Activated CD4-positive, alpha-beta T cell treated with anti-CD3 and anti-CD28 coated beads, Interleukin-2, amount 10 ng/mL, durations not matched to agents 7 days and 5 days (primary cell): ENCODE measurements at regions of chr2 and their contacts with region 1.

Region 1: DNA sequence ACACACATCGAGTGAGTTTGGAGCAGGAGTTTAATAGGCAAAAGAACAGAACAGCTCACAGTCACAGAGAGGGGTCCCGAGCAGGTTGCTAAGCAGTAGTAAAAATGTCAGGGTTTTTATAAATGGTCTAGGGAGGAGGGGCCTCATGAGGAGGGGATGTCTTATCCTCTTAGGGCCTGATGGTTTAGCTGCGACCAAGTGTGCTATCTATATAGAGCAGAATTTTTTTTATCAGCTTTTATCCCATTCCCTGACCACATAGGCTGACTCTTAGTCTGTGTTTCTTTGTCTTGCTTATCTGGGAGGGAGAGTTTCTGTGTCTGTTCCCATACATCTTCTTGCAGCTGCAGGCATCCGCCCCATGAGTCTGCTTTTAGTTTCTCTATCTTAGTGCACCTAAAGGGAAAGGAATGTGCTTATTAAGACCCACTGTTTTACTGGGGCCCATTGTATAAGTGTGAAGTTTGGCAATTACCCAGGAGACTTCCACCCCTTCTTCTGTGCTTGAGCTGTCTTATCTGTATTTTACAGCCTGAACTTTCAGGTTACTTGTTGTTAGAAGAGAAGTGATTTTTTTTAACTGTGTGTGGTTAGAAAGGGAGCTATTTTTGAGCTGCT is 30.4 kb upstream of the GMCL1 start:
- DNase-seq: no peak
- H3K4me3 Mint-ChIP-seq: no peak overlapping the region
- H3K27ac Mint-ChIP-seq: no peak overlapping the region
- H3K4me1 Mint-ChIP-seq: peaks cover 29% of the 10 kb centered on the region
- H3K27me3 Mint-ChIP-seq: no peaks in the 10 kb centered on the region

Region 2: GRCh38 chr2:69694894-69695849 is 103.8 kb before region 1 on chr2:
- CTCF ChIA-PET with region 1: no interaction called
- POLR2A ChIA-PET with region 1: no interaction called
- DNase-seq: no peak
- H3K4me3 Mint-ChIP-seq: no peak overlapping the region
- H3K27ac Mint-ChIP-seq: peak overlapping the region; percentile 55
- H3K4me1 Mint-ChIP-seq: peaks cover 81% of the 10 kb centered on the region
- H3K27me3 Mint-ChIP-seq: peaks cover 2% of the 10 kb centered on the region

Region 3: GRCh38 chr2:69773206-69773767 is 25.7 kb before region 1 on chr2:
- CTCF ChIA-PET with region 1: no interaction called
- POLR2A ChIA-PET with region 1: no interaction called
- DNase-seq: no peak
- H3K4me3 Mint-ChIP-seq: no peak overlapping the region
- H3K27ac Mint-ChIP-seq: peak overlapping the region; percentile 83
- H3K4me1 Mint-ChIP-seq: peaks cover 64% of the 10 kb centered on the region
- H3K27me3 Mint-ChIP-seq: no peaks in the 10 kb centered on the region

Region 4: DNA sequence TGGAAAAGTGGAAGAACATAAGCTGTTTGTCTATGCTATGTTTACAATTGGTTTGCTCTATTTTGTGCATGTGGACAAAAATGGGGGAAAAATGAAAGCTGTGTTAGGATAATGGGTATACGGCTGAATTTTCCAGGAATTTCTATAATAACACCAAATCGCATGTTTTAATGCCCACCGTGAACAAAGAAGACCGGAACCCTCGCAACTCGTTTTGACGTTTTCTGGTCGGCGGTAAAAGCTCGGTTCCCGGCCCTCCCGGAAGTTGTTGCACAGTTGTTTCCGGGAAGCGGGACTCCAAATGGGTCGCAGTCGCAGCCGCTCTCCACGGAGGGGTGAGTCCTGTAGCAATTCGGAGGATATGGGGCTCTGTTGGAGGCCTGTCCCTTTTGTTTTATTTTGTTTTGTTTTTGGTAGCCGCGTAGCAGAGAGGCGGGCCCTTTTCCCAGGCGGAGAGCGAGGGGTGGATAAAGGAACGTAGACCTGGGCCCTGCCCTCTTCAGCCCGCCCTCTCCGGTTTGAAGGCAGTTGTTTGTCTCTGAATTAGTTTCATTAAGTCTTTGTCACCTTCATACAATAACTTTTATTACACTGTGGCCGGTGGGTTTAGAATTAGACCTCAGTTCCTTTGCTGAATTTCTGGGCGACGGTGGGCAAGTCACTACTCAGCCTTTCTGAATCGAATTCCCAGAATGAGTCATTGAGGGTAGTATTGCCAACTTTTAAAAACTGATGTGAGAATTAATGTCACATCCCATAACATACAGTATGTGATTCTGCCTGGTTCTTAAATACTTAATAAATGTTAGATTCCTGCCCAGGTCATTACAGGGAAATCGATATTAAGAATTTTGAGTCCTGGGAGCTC is 94.9 kb after region 1 on chr2 and contains the start of gene SNRNP27:
- CTCF ChIA-PET with region 1: no interaction called
- POLR2A ChIA-PET with region 1: interaction called, 15 read pairs
- DNase-seq: peak; percentile 85
- H3K4me3 Mint-ChIP-seq: peak within 1 kb of the TSS; percentile 100
- H3K27ac Mint-ChIP-seq: peak within 1 kb of the TSS; percentile 99
- H3K4me1 Mint-ChIP-seq: peaks cover 47% of the 10 kb centered on the region
- H3K27me3 Mint-ChIP-seq: peaks cover 1% of the 10 kb centered on the region
- total RNA-seq, gene SNRNP27: 58.1 to 62.8 TPM

Region 5: GRCh38 chr2:70086838-70087701 is 288.1 kb after region 1 on chr2 and contains the start of gene PCBP1:
- CTCF ChIA-PET with region 1: no interaction called
- POLR2A ChIA-PET with region 1: no interaction called
- DNase-seq: peak; percentile 96
- H3K4me3 Mint-ChIP-seq: peak within 1 kb of the TSS; percentile 98
- H3K27ac Mint-ChIP-seq: peak within 1 kb of the TSS; percentile 100
- H3K4me1 Mint-ChIP-seq: peaks cover 56% of the 10 kb centered on the region
- H3K27me3 Mint-ChIP-seq: no peaks in the 10 kb centered on the region
- total RNA-seq, gene PCBP1: 527 to 544 TPM